Left cardiac atrium (tissue), 4 donors: ENCODE measurements at regions of chr1 and their contacts with region 1.

Region 1: DNA sequence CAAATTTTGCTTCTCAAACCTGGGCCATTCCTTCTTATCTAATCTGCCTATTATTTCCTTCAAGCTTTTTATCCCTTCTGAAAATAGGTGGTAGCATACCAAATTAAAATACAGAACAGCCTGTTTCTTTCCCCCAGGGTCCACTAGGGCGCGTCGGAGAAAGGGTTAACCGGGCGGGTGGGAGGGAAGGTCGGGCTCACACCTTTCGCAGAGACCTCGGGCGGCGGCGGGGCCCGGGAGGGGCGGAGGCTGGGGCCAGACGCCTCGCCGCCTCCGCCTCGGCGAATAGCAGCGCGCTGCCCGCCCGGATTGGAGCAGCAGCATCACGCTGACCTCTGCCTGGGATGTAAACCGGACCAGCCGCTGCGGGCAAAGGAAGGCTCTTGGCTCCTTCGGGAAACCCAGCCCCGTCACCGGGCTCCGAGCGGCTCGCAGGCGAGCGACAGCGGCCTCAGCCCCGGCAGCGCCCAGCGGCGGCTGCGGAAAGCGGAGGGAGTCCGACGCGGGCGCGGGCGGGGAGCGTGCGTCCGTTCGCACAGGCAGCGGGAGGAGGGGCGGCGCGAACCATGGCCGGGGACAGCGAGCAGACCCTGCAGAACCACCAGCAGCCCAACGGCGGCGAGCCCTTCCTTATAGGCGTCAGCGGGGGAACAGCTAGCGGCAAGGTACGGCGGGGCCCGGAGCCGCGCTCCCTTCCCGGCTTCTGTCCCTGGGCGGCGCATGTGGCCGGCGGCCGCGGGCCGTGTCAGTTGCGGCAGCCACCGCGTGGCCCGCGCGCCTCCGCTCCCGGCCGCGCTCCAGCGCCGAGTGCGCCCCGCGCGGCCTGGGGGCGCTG is at the start of gene UCK2:
- DNase-seq: peak; percentile 86
- ATAC-seq: peak; percentile 96 to 97
- total RNA-seq, gene UCK2: 8.0 to 18.2 TPM

Region 2: GRCh38 chr1:165645654-165646366 is 181.7 kb before region 1 on chr1:
- intact Hi-C with region 1: no loop called
- DNase-seq: peak; percentile 34
- ATAC-seq: peak; percentile 40 to 66

Region 3: GRCh38 chr1:165768513-165769394 is 58.7 kb before region 1 on chr1 and contains the start of gene TMCO1:
- intact Hi-C with region 1: loop called in 1 of 2 experiments (anchors 2 kb)
- DNase-seq: peak; percentile 95
- ATAC-seq: peak; percentile 100
- total RNA-seq, gene TMCO1: 61.9 to 63.5 TPM

Region 4: GRCh38 chr1:165974598-165975131 is 147.2 kb after region 1 on chr1:
- intact Hi-C with region 1: no loop called
- DNase-seq: no peak
- ATAC-seq: no peak